ENCODE measurements at regions of chr1 and their contacts with region 1.

Region 1: GRCh38 chr1:33055210-33056008 is 18.7 kb upstream of the AK2 start:
- DNase-seq: peak; percentile 85
- H3K4me3 ChIP-seq: no peak overlapping the region
- H3K27ac ChIP-seq: no peak overlapping the region
- H3K4me1 ChIP-seq: peaks cover 6% of the 10 kb centered on the region
- H3K27me3 ChIP-seq: no peaks in the 10 kb centered on the region
- CTCF ChIP-seq: peak; percentile 40 to 79 (median 66)
- POLR2A ChIP-seq: no peak

Region 2: DNA sequence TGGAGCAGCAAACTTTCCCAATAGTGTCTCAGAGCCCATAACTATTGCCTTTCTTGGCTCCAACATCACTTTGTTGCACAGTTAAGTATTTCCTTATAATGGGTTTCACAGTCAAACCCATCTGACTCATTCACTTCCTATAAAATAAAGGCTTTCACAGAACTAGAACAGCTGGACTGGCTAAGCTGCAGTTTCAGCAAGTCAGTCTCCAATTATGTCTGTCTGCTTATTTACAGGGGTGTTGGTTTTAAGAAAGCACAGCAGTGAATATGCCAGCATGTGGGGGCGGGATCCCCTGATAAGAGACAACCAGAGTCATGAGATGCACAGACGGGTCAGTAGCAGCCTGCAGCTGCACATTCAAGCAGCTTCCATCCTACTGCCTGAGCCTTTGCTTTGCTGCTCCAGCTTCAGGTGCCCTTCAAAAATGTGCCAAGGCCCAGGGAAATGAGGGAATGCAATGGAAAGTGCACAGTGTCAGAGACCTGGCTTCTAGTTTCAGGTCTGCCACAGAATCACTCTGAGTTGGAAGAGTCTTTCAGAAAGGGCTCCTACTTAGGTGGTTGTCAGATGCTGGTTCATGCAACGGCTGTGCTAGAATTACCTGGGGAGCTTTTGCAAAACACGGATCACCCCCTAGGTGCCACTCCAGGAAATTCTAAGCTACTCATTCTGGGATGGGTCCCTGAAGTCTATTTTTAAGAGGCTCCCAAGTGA is 115.6 kb before region 1 on chr1:
- intact Hi-C with region 1: loop called (anchors 10 kb)
- DNase-seq: peak; percentile 71
- H3K4me3 ChIP-seq: no peak overlapping the region
- H3K27ac ChIP-seq: no peak overlapping the region
- H3K4me1 ChIP-seq: peaks cover 9% of the 10 kb centered on the region
- H3K27me3 ChIP-seq: no peaks in the 10 kb centered on the region
- CTCF ChIP-seq: no peak
- POLR2A ChIP-seq: no peak